ENCODE measurements at regions of chr1 and their contacts with region 1.

Region 1: DNA sequence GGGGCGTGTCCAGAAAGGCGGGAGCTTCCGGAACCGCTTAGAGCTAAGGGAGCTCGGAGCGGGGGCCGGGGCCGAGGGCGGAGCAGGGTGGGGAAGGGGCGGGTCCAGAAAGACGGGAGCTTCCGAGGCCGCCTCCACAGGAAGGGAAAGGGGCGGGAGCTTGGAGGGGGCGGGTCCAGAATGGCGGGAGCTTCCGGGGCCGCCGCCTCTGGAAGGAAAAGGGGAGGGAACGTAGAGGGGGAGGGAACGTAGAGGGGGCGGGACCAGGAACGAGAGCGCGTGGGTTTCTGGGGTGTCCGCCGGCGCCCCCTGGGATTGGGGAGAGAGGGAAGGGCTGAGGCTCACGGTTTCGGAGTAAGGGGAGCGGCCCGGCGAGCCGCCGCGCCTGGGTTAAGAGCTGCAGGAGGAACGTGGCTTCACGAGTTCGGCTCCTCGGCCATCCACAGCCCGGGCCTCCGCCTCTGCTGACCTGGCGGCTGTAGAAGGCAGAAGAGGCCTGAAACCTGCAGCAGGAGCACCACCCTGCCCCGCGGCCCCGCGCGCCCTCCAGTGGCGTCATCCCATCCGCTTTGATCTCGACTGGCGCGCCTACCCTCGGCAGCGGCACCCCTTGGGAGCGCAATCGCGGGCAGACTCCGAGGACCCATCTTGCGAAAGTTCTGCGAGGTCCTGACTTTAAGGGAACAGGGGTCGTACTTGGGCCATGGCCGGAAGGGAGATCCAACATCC is 22.9 kb upstream of the HPDL start:
- DNase-seq: peak; percentile 99
- ATAC-seq: peak; percentile 89
- H3K4me3 Mint-ChIP-seq: peak overlapping the region; percentile 92
- H3K27ac Mint-ChIP-seq: peak overlapping the region; percentile 97
- H3K4me1 Mint-ChIP-seq: peaks cover 41% of the 10 kb centered on the region
- H3K27me3 Mint-ChIP-seq: no peaks in the 10 kb centered on the region

Region 2: DNA sequence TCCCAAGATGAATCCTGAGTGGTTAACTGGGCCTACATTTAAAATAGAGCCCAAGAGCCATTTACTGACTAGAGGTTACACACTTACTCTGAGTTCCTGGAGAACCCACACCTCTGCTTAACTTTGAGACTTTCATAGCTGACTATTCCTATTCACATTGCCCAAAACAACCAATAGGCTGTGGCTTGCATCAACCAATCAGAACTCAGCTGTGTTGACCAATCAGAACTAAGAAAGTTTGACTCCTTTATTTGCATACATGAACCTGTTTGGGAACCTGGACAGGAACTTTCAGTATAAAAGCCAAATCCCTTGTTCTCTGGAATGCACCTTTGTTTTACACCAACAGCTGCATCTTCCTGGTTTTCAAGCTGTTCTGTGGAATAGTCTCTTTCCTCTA is 106.9 kb before region 1 on chr1:
- CTCF ChIA-PET with region 1: no interaction called
- DNase-seq: no peak
- ATAC-seq: no peak
- H3K4me3 Mint-ChIP-seq: no peak overlapping the region
- H3K27ac Mint-ChIP-seq: no peak overlapping the region
- H3K4me1 Mint-ChIP-seq: no peaks in the 10 kb centered on the region
- H3K27me3 Mint-ChIP-seq: peaks cover 9% of the 10 kb centered on the region

Region 3: DNA sequence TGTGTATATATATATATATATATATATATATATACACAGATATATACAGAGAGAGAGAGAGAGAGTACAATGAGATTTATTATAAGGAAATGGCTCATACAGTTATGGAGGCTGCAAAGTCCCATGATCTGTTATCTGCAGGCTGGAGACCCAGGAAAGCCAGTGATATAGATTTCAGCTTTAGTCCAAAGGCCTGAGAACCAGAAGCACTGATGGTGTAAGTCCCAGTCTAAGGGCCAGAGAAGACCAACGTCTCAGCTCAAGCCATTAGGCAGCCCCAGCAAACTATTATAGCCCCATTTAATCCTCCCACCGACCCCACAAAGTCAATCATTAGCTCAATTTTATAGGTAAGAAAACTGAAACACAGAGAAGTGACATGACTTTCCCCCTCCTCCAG is 12.0 kb before region 1 on chr1:
- CTCF ChIA-PET with region 1: interaction called, 11 read pairs
- DNase-seq: no peak
- ATAC-seq: no peak
- H3K4me3 Mint-ChIP-seq: no peak overlapping the region
- H3K27ac Mint-ChIP-seq: no peak overlapping the region
- H3K4me1 Mint-ChIP-seq: no peaks in the 10 kb centered on the region
- H3K27me3 Mint-ChIP-seq: peaks cover 6% of the 10 kb centered on the region

Region 4: GRCh38 chr1:45326627-45327623 is 23.2 kb after region 1 on chr1 and contains the start of gene HPDL:
- CTCF ChIA-PET with region 1: interaction called, 23 read pairs
- DNase-seq: peak; percentile 83
- ATAC-seq: peak; percentile 89
- H3K4me3 Mint-ChIP-seq: peak within 1 kb of the TSS; percentile 80
- H3K27ac Mint-ChIP-seq: peak within 1 kb of the TSS; percentile 83
- H3K4me1 Mint-ChIP-seq: peaks cover 24% of the 10 kb centered on the region
- H3K27me3 Mint-ChIP-seq: no peaks in the 10 kb centered on the region
- total RNA-seq, gene HPDL: 16.3 to 23.4 TPM